Pancreas (tissue), 10 donors: ENCODE measurements at regions of chr16 and their contacts with region 1.

Region 1: DNA sequence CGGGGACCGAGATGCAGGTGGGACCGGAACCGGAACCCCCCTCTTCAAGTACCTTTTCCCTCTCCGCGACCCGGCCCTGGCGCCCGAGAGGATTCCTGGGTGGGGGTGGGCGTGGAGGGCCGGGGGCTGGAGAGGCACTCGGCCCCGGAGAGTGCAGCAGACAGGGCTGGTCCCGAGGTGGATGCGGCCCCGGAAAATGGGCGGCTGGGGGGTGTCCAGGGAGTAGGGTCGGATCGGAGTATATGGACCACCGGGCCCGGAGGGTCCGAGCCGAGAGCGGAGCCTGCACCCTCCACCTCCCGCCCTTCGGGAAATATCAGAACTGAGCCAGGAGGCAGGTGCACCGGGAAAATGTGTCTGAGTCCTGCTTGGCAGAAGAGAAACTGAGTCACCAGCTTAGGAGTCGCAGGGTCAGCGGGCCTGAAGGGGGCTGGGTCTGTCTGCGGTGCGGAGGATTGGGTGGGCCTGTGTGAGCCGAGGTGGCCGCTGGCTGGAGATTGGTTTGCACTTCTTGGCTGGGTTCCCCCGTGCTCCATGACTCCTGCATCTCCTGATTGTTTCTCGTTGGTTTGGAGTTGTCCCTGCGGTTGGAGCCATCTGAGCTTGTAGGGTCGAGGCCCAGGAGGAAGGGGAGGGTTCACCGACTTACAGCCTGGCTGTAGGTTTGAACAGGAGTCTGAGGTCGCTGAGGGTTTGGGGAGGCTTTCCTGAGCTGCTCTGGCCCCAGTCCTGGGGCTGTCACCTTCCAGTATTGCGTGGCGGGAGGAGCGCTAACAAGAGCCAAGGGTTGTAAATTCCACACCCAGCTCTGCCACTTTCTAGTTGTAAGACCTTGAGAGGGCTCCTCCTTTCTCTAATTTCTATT is 518 bp downstream of the SH2B1 start:
- DNase-seq: peak in 1 of 6 donors; percentile 43
- ATAC-seq: peak; percentile 3 to 10 (median 5)
- H3K4me3 ChIP-seq: peak overlapping the region; percentile 49 to 68 (median 62)
- H3K27ac ChIP-seq: peak overlapping the region; percentile 51 to 90 (median 72)
- H3K4me1 ChIP-seq: peaks cover 0 to 10% (median 5%) of the 10 kb centered on the region in 3 donors
- H3K27me3 ChIP-seq: no peaks in the 10 kb centered on the region
- CTCF ChIP-seq: no peak

Region 2: GRCh38 chr16:28910086-28911031 is 46.2 kb after region 1 on chr16:
- intact Hi-C with region 1: loop called in 1 of 3 experiments (anchors 10 kb)
- DNase-seq: peak in 2 of 6 donors; percentile 36 to 75
- ATAC-seq: no peak
- H3K4me3 ChIP-seq: no peak overlapping the region
- H3K27ac ChIP-seq: no peak overlapping the region
- H3K4me1 ChIP-seq: no peaks in the 10 kb centered on the region
- H3K27me3 ChIP-seq: no peaks in the 10 kb centered on the region
- CTCF ChIP-seq: no peak

Region 3: GRCh38 chr16:28943281-28943680 is 79.1 kb after region 1 on chr16:
- intact Hi-C with region 1: loop called in 1 of 3 experiments (anchors 5 kb)
- DNase-seq: no peak
- ATAC-seq: no peak
- H3K4me3 ChIP-seq: no peak overlapping the region
- H3K27ac ChIP-seq: no peak overlapping the region
- H3K4me1 ChIP-seq: peaks cover 0 to 5% (median 0%) of the 10 kb centered on the region in 3 donors
- H3K27me3 ChIP-seq: no peaks in the 10 kb centered on the region
- CTCF ChIP-seq: no peak

Region 4: DNA sequence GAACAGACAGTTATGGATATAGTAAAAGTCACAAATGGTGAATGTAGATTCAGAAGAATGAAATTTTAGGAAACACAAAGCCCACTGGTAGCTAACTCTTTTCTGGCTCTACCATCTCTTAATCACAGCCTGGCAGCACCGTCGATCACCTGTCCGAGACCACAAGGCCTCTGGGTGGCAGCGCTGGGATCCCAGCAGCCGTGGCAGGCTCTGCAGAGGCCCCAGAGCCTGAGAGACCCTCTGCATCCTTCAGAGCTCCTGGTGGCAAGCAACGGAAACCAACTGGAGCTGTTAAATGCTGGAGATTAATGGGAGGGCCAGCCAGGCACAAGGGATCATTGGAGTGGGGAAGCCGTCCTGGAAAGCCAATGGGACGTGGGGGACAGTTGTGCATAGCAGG is 147.0 kb after region 1 on chr16:
- intact Hi-C with region 1: no loop called
- DNase-seq: no peak
- ATAC-seq: no peak
- H3K4me3 ChIP-seq: no peak overlapping the region
- H3K27ac ChIP-seq: no peak overlapping the region
- H3K4me1 ChIP-seq: no peaks in the 10 kb centered on the region
- H3K27me3 ChIP-seq: no peaks in the 10 kb centered on the region
- CTCF ChIP-seq: no peak